PC-3 (cell line): ENCODE measurements at regions of chr1 and their contacts with region 1.

Region 1: DNA sequence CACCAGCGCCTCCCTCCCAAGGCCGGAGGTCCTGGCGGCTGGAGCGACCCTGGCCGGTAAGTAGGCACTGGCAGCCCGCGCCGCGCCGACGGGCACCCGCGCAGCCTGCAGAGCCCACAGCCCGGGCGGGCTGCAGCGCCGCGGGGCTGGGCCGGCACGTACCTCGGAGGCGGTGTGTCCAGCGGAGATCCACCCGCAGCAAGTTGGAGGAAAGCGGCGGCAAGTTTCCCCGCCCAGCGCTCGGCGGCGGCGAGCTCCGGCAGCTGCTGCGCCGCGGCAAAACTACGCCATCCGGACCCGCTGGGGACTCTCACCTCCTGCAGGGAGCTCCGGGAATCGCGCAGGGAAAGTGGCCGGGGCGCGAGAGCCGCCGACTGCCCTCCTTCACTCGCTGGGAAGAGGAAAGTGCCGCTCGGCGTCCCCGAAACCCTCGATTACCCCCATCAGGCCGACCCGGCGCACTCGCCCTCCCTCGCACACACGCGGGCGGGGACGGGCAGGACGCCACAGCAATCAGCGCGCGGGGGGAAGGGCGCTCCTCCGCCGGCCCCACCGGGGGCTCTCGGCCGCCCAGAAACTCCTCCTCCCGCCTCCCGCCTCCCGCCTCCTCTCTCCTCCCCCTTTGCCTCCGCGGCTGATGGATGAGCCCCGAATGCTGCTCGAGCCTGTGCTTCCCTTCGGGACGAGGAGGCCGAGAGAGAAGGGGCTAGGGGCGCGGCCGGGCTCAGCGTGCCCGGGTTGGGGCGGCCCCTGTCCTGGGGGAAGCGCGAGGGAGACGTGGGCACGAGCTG is at the start of gene TGFBR3:
- DNase-seq: peak; percentile 70
- ATAC-seq: peak; percentile 68
- H3K4me3 ChIP-seq: peak within 1 kb of the TSS; percentile 90
- H3K27ac ChIP-seq: 0 out of 2 replicates have a peak within 1 kb of the TSS, but pooled peaks have one; percentile 3
- H3K4me1 ChIP-seq: peaks cover 23% of the 10 kb centered on the region
- H3K27me3 ChIP-seq: no peaks in the 10 kb centered on the region
- CTCF ChIP-seq: peak; percentile 45; the same call in 1 of the 2 replicates
- total RNA-seq, gene TGFBR3: 2.8 and 3.0 TPM in 2 replicates

Region 2: GRCh38 chr1:91546876-91547275 is 339.0 kb before region 1 on chr1:
- CTCF ChIA-PET with region 1: no interaction called
- POLR2A ChIA-PET with region 1: no interaction called
- intact Hi-C with region 1: loop called (anchors 1 kb)
- DNase-seq: peak; percentile 52
- ATAC-seq: peak; percentile 88
- H3K4me3 ChIP-seq: no peak overlapping the region
- H3K27ac ChIP-seq: no peak overlapping the region
- H3K4me1 ChIP-seq: no peaks in the 10 kb centered on the region
- H3K27me3 ChIP-seq: no peaks in the 10 kb centered on the region
- CTCF ChIP-seq: peak; percentile 68

Region 3: DNA sequence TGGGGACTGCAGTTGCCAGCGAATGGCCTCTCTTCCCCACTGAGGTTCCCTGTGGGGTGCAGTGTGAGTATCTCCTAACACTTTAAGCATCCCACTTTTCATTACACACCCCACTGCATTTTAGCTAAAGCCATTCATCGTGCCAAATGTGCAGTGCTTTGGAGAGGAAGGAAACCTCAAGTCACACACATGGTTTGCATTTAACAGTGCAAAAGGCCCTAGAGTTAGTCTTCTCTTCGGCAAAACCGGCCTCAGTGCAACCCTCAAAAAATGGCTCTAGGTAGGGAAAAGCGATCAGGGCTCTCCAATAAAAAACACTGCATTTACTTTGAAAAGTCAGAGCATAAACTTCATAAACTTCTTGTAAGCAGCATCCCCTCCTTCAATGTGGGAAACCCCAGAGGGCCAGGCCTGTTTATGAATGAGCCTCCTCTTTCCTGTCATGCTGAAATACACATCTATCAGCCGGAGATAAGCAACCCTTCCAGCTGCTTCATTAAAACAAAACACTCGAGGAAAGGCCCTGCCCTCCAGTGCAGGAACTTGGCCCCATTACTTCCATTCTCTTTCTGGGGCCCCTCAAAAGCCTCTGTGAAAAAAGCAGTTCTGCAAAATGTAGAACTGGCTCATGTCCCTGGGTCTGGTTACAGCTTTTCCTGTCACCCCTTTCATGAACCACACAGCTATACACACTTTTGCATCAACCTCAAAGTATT is 201.3 kb before region 1 on chr1:
- CTCF ChIA-PET with region 1: no interaction called
- POLR2A ChIA-PET with region 1: no interaction called
- intact Hi-C with region 1: loop called (anchors 2 kb)
- DNase-seq: no peak
- ATAC-seq: no peak
- H3K4me3 ChIP-seq: no peak overlapping the region
- H3K27ac ChIP-seq: no peak overlapping the region
- H3K4me1 ChIP-seq: peaks cover 11% of the 10 kb centered on the region
- H3K27me3 ChIP-seq: no peaks in the 10 kb centered on the region
- CTCF ChIP-seq: no peak

Region 4: GRCh38 chr1:91795591-91796389 is 90.1 kb before region 1 on chr1:
- CTCF ChIA-PET with region 1: no interaction called
- POLR2A ChIA-PET with region 1: no interaction called
- intact Hi-C with region 1: loop called (anchors 5 kb)
- DNase-seq: peak; percentile 77
- ATAC-seq: peak; percentile 90
- H3K4me3 ChIP-seq: peak overlapping the region; percentile 16; the same call in 1 of the 2 replicates
- H3K27ac ChIP-seq: peak overlapping the region; percentile 27
- H3K4me1 ChIP-seq: peaks cover 28% of the 10 kb centered on the region
- H3K27me3 ChIP-seq: no peaks in the 10 kb centered on the region
- CTCF ChIP-seq: no peak

Region 5: DNA sequence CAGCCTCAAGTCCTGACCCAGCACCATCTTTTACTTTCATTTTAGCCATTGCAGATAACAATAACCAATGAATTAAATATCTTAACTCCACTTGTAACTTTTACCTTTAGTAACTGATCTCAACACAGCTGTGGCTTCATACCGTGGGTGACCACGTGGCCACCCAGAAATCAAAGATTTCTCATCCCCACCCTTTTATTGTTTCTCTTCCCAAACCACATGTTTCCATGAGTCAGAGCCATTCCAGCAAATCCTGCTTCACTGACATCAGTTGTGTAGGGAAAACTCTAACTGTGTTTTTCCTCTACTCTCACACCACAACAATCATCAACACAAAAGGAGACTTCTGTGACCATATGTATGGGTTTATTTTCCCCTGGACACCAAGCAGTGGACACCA is 38.2 kb after region 1 on chr1:
- CTCF ChIA-PET with region 1: interaction called, 4 read pairs
- POLR2A ChIA-PET with region 1: interaction called, 6 read pairs
- intact Hi-C with region 1: loop called (anchors 1 kb)
- DNase-seq: peak; percentile 55
- ATAC-seq: 0 out of 2 replicates have a peak, but pooled peaks have one; percentile 20
- H3K4me3 ChIP-seq: no peak overlapping the region
- H3K27ac ChIP-seq: no peak overlapping the region
- H3K4me1 ChIP-seq: no peaks in the 10 kb centered on the region; the same call in 1 of the 2 replicates
- H3K27me3 ChIP-seq: no peaks in the 10 kb centered on the region
- CTCF ChIP-seq: no peak

Region 6: GRCh38 chr1:92495392-92496063 is 609.6 kb after region 1 on chr1:
- CTCF ChIA-PET with region 1: no interaction called
- POLR2A ChIA-PET with region 1: no interaction called
- intact Hi-C with region 1: no loop called
- DNase-seq: no peak
- ATAC-seq: no peak
- H3K4me3 ChIP-seq: no peak overlapping the region
- H3K27ac ChIP-seq: no peak overlapping the region
- H3K4me1 ChIP-seq: no peaks in the 10 kb centered on the region
- H3K27me3 ChIP-seq: no peaks in the 10 kb centered on the region
- CTCF ChIP-seq: no peak